MCF 10A (cell line): ENCODE measurements at regions of chr17 and their contacts with region 1.

Region 1: GRCh38 chr17:31558748-31559644 is 167.5 kb downstream of the RAB11FIP4 start:
- DNase-seq: peak; percentile 77
- H3K4me3 Mint-ChIP-seq: peak overlapping the region; percentile 63
- H3K27ac Mint-ChIP-seq: no peak overlapping the region
- H3K4me1 Mint-ChIP-seq: peaks cover 19% of the 10 kb centered on the region
- H3K27me3 Mint-ChIP-seq: no peaks in the 10 kb centered on the region
- CTCF ChIP-seq: peak; percentile 85

Region 2: GRCh38 chr17:31327534-31328159 is 231.3 kb before region 1 on chr17:
- CTCF ChIA-PET with region 1: no interaction called
- POLR2A ChIA-PET with region 1: no interaction called
- intact Hi-C with region 1: no loop called
- DNase-seq: peak; percentile 78
- H3K4me3 Mint-ChIP-seq: no peak overlapping the region
- H3K27ac Mint-ChIP-seq: peak overlapping the region; percentile 90
- H3K4me1 Mint-ChIP-seq: peaks cover 38% of the 10 kb centered on the region
- H3K27me3 Mint-ChIP-seq: no peaks in the 10 kb centered on the region
- CTCF ChIP-seq: no peak

Region 3: GRCh38 chr17:31570951-31571892 is 12.2 kb after region 1 on chr17:
- CTCF ChIA-PET with region 1: interaction called, 11 read pairs
- POLR2A ChIA-PET with region 1: interaction called, 3 read pairs
- intact Hi-C with region 1: no loop called
- DNase-seq: peak; percentile 88
- H3K4me3 Mint-ChIP-seq: peak overlapping the region; percentile 44
- H3K27ac Mint-ChIP-seq: peak overlapping the region; percentile 92
- H3K4me1 Mint-ChIP-seq: peaks cover 41% of the 10 kb centered on the region
- H3K27me3 Mint-ChIP-seq: no peaks in the 10 kb centered on the region
- CTCF ChIP-seq: no peak

Region 4: DNA sequence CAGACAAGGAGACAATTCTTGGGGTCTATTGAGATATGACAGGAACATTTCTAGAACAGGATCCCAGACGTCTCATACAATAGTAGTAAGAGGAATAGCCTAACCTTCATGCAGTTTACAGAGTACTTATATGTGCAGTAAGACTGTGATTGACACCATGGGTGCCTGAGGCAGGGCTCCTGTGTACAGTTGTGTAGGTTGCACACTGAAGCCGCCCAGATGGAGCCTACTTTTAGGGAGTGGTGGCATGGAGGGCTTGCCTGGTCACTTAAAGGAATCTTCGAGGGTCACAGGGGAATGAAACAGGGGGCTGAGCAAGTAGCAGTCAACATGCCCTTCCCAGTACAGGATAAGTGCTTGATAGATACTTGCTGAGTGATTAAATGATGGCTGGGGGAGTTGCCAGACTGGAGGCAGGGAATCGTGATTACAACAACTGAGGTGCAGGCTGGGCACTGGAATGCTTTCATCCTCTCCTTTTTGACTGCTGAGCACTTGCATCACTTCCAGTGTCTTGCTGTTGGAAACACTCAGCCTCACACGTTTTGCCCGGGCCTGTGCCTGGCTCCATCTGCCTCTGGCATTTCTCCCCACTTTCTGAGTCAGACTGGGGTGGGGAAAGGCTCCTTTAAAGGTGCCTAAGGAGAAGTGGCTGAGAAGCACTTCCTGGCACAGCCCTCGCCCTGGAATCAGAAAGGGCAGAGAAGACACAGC is 229.0 kb after region 1 on chr17:
- CTCF ChIA-PET with region 1: no interaction called
- POLR2A ChIA-PET with region 1: no interaction called
- intact Hi-C with region 1: loop called (anchors 2 kb)
- DNase-seq: peak; percentile 98
- H3K4me3 Mint-ChIP-seq: no peak overlapping the region
- H3K27ac Mint-ChIP-seq: peak overlapping the region; percentile 86
- H3K4me1 Mint-ChIP-seq: peaks cover 19% of the 10 kb centered on the region
- H3K27me3 Mint-ChIP-seq: no peaks in the 10 kb centered on the region
- CTCF ChIP-seq: no peak

Region 5: GRCh38 chr17:31825961-31826691 is 267.1 kb after region 1 on chr17:
- CTCF ChIA-PET with region 1: interaction called, 4 read pairs
- POLR2A ChIA-PET with region 1: interaction called, 3 read pairs
- intact Hi-C with region 1: loop called (anchors 5 kb)
- DNase-seq: peak; percentile 85
- H3K4me3 Mint-ChIP-seq: no peak overlapping the region
- H3K27ac Mint-ChIP-seq: peak overlapping the region; percentile 86
- H3K4me1 Mint-ChIP-seq: peaks cover 17% of the 10 kb centered on the region
- H3K27me3 Mint-ChIP-seq: no peaks in the 10 kb centered on the region
- CTCF ChIP-seq: no peak